ENCODE measurements at regions of chr13 and their contacts with region 1.

Region 1: GRCh38 chr13:77928909-77929308 is 10.3 kb upstream of the EDNRB start:
- DNase-seq: no peak
- ATAC-seq: no peak
- H3K4me3 ChIP-seq: no peak overlapping the region
- H3K27ac ChIP-seq: no peak overlapping the region
- H3K4me1 ChIP-seq: no peaks in the 10 kb centered on the region
- H3K27me3 ChIP-seq: no peaks in the 10 kb centered on the region
- CTCF ChIP-seq: no peak
- POLR2A ChIP-seq: no peak

Region 2: GRCh38 chr13:77980592-77980991 is 51.7 kb after region 1 on chr13:
- intact Hi-C with region 1: loop called in 1 of 2 experiments (anchors 10 kb)
- DNase-seq: no peak
- ATAC-seq: no peak
- H3K4me3 ChIP-seq: no peak overlapping the region
- H3K27ac ChIP-seq: peak overlapping the region in 1 of 3 donors; percentile 21
- H3K4me1 ChIP-seq: no peaks in the 10 kb centered on the region
- H3K27me3 ChIP-seq: no peaks in the 10 kb centered on the region
- CTCF ChIP-seq: no peak
- POLR2A ChIP-seq: no peak